H1 (cell line): ENCODE measurements at regions of chr4 and their contacts with region 1.

Region 1: DNA sequence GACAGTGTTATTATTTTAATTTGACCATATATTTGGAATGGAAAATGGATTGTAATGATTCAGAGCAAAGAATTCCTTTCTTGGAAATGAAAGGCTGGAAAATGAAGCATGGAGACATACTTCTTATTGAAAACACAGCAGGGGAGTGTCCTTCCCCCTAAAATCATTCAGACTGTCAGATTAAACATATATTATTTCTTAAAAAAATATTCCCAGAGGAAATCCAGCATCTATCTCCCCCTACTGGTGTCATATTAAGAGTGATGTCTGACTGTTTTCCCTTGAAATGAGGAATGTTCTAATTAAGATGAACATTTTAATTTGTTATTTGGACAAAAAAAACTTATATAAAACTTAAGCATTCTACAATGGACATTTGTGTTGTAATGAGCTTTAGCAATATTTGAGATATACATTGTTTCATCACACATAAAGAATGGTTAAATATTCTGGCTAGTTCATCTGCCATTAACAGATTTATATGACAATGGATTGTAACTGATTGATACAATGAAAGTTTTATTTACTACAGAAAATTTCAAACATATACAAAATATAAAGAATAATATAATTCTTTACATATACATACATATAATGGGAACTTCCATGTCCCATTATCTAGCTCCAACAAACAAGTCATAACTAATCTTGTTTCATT is 264.6 kb downstream of the SPRY1 start:
- DNase-seq: no peak
- H3K4me3 ChIP-seq: no peak overlapping the region
- H3K27ac ChIP-seq: no peak overlapping the region
- H3K4me1 ChIP-seq: no peaks in the 10 kb centered on the region
- H3K27me3 ChIP-seq: no peaks in the 10 kb centered on the region
- CTCF ChIP-seq: peak in 1 of 3 experiments; percentile 38; a peak in 2 of 4 replicates
- EP300 ChIP-seq: no peak
- POLR2A ChIP-seq: no peak
- RAD21 ChIP-seq: peak in 1 of 2 experiments; percentile 56; a peak in 3 of 4 replicates

Region 2: GRCh38 chr4:123288309-123289025 is 372.7 kb before region 1 on chr4:
- CTCF ChIA-PET with region 1: no interaction called
- POLR2A ChIA-PET with region 1: no interaction called
- DNase-seq: no peak
- H3K4me3 ChIP-seq: no peak overlapping the region
- H3K27ac ChIP-seq: no peak overlapping the region
- H3K4me1 ChIP-seq: no peaks in the 10 kb centered on the region
- H3K27me3 ChIP-seq: no peaks in the 10 kb centered on the region
- CTCF ChIP-seq: no peak
- EP300 ChIP-seq: no peak
- POLR2A ChIP-seq: no peak
- RAD21 ChIP-seq: no peak

Region 3: DNA sequence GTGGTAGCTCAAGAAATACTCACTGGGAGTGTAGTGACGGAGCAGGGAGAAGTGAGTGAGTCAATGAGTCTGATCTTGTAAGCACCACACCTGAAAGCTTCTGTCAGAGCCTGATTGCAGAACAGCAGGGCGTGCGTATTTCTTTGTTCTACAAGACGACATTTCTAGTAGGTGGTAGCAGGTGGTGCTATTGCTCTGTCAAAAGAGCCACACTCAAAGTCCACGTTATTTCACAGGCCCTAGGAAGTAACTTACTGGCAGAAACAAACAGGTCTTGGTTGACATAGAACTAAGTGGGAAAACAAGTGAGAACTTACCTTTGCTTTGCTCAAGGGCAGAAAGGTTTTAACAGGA is 311.0 kb before region 1 on chr4:
- CTCF ChIA-PET with region 1: interaction called, 48 read pairs
- POLR2A ChIA-PET with region 1: no interaction called
- DNase-seq: peak in 1 of 2 experiments; percentile 41
- H3K4me3 ChIP-seq: no peak overlapping the region
- H3K27ac ChIP-seq: no peak overlapping the region
- H3K4me1 ChIP-seq: peaks cover 0 to 2% (median 0%) of the 10 kb centered on the region in 4 experiments; a peak in 2 of 7 replicates
- H3K27me3 ChIP-seq: no peaks in the 10 kb centered on the region
- CTCF ChIP-seq: peak in 2 of 3 experiments; percentile 70 to 72; a peak in 3 of 4 replicates
- EP300 ChIP-seq: no peak
- POLR2A ChIP-seq: no peak
- RAD21 ChIP-seq: peak; percentile 95 to 96

Region 4: GRCh38 chr4:123359449-123360315 is 301.5 kb before region 1 on chr4:
- CTCF ChIA-PET with region 1: interaction called, 13 read pairs
- POLR2A ChIA-PET with region 1: no interaction called
- DNase-seq: no peak
- H3K4me3 ChIP-seq: no peak overlapping the region
- H3K27ac ChIP-seq: no peak overlapping the region
- H3K4me1 ChIP-seq: no peaks in the 10 kb centered on the region
- H3K27me3 ChIP-seq: no peaks in the 10 kb centered on the region
- CTCF ChIP-seq: no peak
- EP300 ChIP-seq: no peak
- POLR2A ChIP-seq: no peak
- RAD21 ChIP-seq: no peak

Region 5: GRCh38 chr4:123528501-123529277 is 132.5 kb before region 1 on chr4:
- CTCF ChIA-PET with region 1: no interaction called
- POLR2A ChIA-PET with region 1: no interaction called
- DNase-seq: no peak
- H3K4me3 ChIP-seq: no peak overlapping the region
- H3K27ac ChIP-seq: no peak overlapping the region
- H3K4me1 ChIP-seq: no peaks in the 10 kb centered on the region
- H3K27me3 ChIP-seq: no peaks in the 10 kb centered on the region
- CTCF ChIP-seq: no peak
- EP300 ChIP-seq: no peak
- POLR2A ChIP-seq: no peak
- RAD21 ChIP-seq: no peak

Region 6: DNA sequence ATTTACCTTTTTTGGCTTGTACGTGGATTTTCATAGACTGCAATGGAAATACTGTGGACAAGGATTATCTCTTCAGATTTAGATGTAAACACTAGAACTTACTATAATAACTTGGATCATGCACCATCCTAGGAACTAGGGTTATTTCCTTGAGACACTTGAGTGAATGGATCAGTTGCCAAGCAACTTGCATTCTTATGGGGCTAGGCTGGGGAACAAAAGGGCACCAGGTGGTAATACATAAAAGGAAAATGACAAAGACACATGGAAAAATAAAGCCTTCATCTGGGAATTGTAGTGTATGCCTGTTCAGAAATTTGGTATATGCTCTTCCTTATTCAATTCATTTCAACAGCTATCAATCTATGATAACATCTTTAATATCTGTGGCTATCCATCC is 17.5 kb before region 1 on chr4:
- CTCF ChIA-PET with region 1: interaction called, 27 read pairs
- POLR2A ChIA-PET with region 1: no interaction called
- DNase-seq: no peak
- H3K4me3 ChIP-seq: no peak overlapping the region
- H3K27ac ChIP-seq: no peak overlapping the region
- H3K4me1 ChIP-seq: 0 out of 7 replicates have a peak, but pooled peaks cover 0 to 3% (median 0%) of the 10 kb centered on the region in 4 experiments
- H3K27me3 ChIP-seq: no peaks in the 10 kb centered on the region
- CTCF ChIP-seq: no peak
- EP300 ChIP-seq: no peak
- POLR2A ChIP-seq: no peak
- RAD21 ChIP-seq: no peak

Region 7: DNA sequence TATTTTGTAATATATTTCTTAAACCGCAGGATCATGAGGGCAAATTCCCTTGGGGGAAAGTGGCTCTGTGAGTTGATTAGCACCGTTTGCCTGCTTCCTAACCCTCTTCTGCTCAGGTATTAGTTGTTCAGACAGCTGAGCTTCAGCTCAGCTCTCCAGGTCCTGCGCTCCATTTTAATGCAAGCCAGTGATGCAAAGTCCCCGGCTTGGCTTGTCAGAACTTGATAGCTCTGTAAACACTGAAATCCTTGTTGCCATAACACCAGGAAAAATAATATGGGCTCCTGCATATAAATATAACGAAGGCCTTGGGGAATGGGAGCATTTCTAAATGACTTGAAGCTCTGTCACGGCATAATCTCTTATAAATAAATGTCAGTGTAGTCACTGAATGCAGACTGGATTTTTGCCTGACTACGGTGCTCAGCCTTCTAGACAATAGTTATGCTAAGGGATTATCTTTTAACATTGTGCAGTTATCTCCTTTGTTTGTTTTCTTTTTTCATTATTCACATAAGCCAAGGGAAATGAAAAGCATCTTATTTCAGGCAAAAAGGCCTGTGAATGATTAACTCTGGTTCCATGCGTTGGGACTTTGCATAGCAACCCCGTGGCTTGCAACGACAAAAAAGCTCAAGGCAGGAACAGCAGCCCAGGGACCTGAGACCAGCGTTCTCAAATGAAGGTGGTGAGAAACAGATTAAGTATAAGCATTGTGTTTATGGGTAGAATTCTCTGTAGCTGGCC is 11.4 kb before region 1 on chr4:
- CTCF ChIA-PET with region 1: interaction called, 27 read pairs
- POLR2A ChIA-PET with region 1: no interaction called
- DNase-seq: peak in 1 of 2 experiments; percentile 5
- H3K4me3 ChIP-seq: no peak overlapping the region
- H3K27ac ChIP-seq: no peak overlapping the region
- H3K4me1 ChIP-seq: peaks cover 1 to 3% (median 2%) of the 10 kb centered on the region in 4 experiments; a peak in 3 of 7 replicates
- H3K27me3 ChIP-seq: no peaks in the 10 kb centered on the region
- CTCF ChIP-seq: no peak
- EP300 ChIP-seq: no peak
- POLR2A ChIP-seq: no peak
- RAD21 ChIP-seq: no peak

Region 8: GRCh38 chr4:123671633-123672404 is 10.6 kb after region 1 on chr4:
- CTCF ChIA-PET with region 1: interaction called, 18 read pairs
- POLR2A ChIA-PET with region 1: no interaction called
- DNase-seq: no peak
- H3K4me3 ChIP-seq: no peak overlapping the region
- H3K27ac ChIP-seq: no peak overlapping the region
- H3K4me1 ChIP-seq: peaks cover 0 to 4% (median 0%) of the 10 kb centered on the region in 4 experiments; a peak in 1 of 7 replicates
- H3K27me3 ChIP-seq: peaks cover 0 to under 1% (median 0%) of the 10 kb centered on the region in 4 experiments; a peak in 1 of 7 replicates
- CTCF ChIP-seq: no peak
- EP300 ChIP-seq: no peak
- POLR2A ChIP-seq: no peak
- RAD21 ChIP-seq: no peak